Activated CD4-positive, alpha-beta T cell treated with anti-CD3 and anti-CD28 coated beads for 36 hours (primary cell): ENCODE measurements at regions of chr16 and their contacts with region 1.

Region 1: DNA sequence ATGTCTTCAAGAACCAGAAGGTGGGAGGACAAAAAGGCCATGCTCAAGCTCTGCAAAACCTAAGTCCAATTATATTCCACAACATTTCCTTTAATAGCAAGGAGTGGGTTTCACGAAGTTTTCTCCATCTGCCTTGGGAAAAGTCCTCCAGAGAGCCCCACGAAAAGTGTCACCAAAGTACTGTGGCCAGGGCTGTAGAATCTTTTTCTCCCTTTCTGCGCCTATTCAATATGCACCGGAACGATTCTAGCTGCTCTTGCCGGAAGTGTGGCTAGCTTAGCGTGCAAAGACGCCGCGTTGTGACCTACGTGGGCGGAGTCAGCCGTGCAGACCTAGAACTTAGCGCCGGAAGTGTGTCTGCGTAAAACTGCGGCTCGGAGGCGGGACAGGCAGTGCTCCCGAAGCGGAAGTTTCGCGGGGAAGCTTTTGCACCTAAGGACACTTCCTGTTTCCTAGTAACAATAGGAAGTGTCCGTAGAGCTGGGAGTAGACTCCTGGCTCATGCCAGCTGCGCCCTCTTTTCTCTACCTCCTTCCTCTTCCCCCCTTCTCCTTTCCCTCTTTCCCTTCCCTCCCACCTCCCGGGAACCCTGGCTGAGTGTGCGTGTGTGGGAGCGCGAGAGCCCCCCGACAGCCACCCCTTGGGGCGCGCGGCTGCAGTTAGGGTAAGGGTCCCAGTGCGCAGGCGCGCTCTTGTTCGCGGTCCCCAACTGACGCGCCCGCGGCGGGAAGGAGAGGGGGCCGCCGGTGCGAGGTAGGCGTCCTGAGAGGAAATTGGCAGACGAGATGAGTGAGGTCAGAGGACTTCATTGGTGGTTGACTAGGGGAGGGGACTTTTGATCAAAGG is at the starts of genes ZNF646 and ZNF668:
- DNase-seq: peak; percentile 99
- ATAC-seq: peak; percentile 83
- H3K4me3 Mint-ChIP-seq: peak within 1 kb of the TSS; percentile 97
- H3K27ac Mint-ChIP-seq: peak within 1 kb of the TSS; percentile 98
- H3K4me1 Mint-ChIP-seq: peaks cover 30% of the 10 kb centered on the region
- H3K27me3 Mint-ChIP-seq: no peaks in the 10 kb centered on the region
- total RNA-seq, gene ZNF646: 21.3 to 25.8 TPM
- total RNA-seq, gene ZNF668: 9.2 to 9.9 TPM

Region 2: GRCh38 chr16:30761928-30762810 is 312.0 kb before region 1 on chr16 and contains the starts of genes CFAP119 and RNF40:
- CTCF ChIA-PET with region 1: no interaction called
- POLR2A ChIA-PET with region 1: no interaction called
- intact Hi-C with region 1: loop called in 1 of 2 experiments (anchors 1 kb)
- DNase-seq: peak; percentile 94
- ATAC-seq: peak; percentile 98
- H3K4me3 Mint-ChIP-seq: peak within 1 kb of the TSS; percentile 90
- H3K27ac Mint-ChIP-seq: peak within 1 kb of the TSS; percentile 83
- H3K4me1 Mint-ChIP-seq: peaks cover 25% of the 10 kb centered on the region
- H3K27me3 Mint-ChIP-seq: no peaks in the 10 kb centered on the region
- total RNA-seq, gene CFAP119: 1.7 to 3.1 TPM
- total RNA-seq, gene RNF40: 72.3 to 85.5 TPM

Region 3: GRCh38 chr16:30820952-30821760 is 253.0 kb before region 1 on chr16:
- CTCF ChIA-PET with region 1: no interaction called
- POLR2A ChIA-PET with region 1: no interaction called
- intact Hi-C with region 1: no loop called
- DNase-seq: no peak
- ATAC-seq: no peak
- H3K4me3 Mint-ChIP-seq: no peak overlapping the region
- H3K27ac Mint-ChIP-seq: no peak overlapping the region
- H3K4me1 Mint-ChIP-seq: no peaks in the 10 kb centered on the region
- H3K27me3 Mint-ChIP-seq: no peaks in the 10 kb centered on the region

Region 4: GRCh38 chr16:30984669-30985400 is 89.4 kb before region 1 on chr16 and contains the start of gene HSD3B7:
- CTCF ChIA-PET with region 1: interaction called, 5 read pairs
- POLR2A ChIA-PET with region 1: interaction called, 4 read pairs
- intact Hi-C with region 1: loop called in 1 of 2 experiments (anchors 1 kb)
- DNase-seq: peak; percentile 91
- ATAC-seq: peak; percentile 92
- H3K4me3 Mint-ChIP-seq: no peak within 1 kb of the TSS
- H3K27ac Mint-ChIP-seq: peak within 1 kb of the TSS; percentile 31
- H3K4me1 Mint-ChIP-seq: peaks cover 3% of the 10 kb centered on the region
- H3K27me3 Mint-ChIP-seq: no peaks in the 10 kb centered on the region
- total RNA-seq, gene HSD3B7: 1.6 to 2.2 TPM

Region 5: DNA sequence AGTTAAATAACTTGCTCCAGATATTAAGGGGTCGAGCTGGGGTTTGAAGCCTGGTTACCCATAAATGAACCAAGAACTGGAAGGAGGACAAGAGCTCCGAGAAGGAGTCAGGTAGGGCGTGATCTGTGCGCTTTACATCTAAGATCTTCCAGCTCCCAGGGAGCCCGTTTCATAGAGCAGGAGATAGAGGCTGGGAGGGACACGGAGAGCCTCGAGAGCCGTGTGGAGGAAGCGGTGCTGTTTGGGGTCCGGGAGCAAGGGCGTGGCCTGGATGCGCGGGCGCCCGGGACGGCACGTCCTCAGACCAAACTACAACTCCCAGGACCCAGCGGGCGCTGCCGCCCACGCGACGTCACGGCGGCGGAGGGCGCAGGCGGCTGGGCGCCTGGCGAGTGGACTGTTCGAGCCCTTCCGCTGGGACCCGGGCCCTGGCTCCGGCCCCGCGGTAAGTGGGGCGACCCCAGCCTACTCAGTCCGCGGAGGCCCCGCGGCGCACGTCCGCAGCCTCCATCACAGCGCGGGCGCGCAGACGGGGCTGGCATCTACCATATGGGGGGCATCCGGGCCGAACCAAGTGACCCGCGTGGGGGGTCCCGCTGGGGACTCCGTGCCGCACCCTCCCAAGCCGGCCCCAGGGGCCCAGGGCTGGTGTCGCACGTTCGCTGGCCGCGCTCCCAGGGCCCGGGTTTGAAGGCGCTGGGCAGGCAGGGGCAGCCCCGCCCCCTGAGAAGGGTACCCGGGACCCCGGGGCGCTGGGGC is 34.0 kb after region 1 on chr16 and contains the start of gene BCKDK:
- CTCF ChIA-PET with region 1: no interaction called
- POLR2A ChIA-PET with region 1: interaction called, 3 read pairs
- intact Hi-C with region 1: loop called in 1 of 2 experiments (anchors 2 kb)
- DNase-seq: peak; percentile 90
- ATAC-seq: peak; percentile 79
- H3K4me3 Mint-ChIP-seq: peak within 1 kb of the TSS; percentile 86
- H3K27ac Mint-ChIP-seq: peak within 1 kb of the TSS; percentile 96
- H3K4me1 Mint-ChIP-seq: peaks cover 22% of the 10 kb centered on the region
- H3K27me3 Mint-ChIP-seq: no peaks in the 10 kb centered on the region
- total RNA-seq, gene BCKDK: 50.0 to 53.3 TPM

Region 6: GRCh38 chr16:31440516-31441184 is 366.5 kb after region 1 on chr16:
- CTCF ChIA-PET with region 1: no interaction called
- POLR2A ChIA-PET with region 1: no interaction called
- intact Hi-C with region 1: loop called in 1 of 2 experiments (anchors 1 kb)
- DNase-seq: no peak
- ATAC-seq: no peak
- H3K4me3 Mint-ChIP-seq: no peak overlapping the region
- H3K27ac Mint-ChIP-seq: no peak overlapping the region
- H3K4me1 Mint-ChIP-seq: peaks cover 18% of the 10 kb centered on the region
- H3K27me3 Mint-ChIP-seq: peaks cover 2% of the 10 kb centered on the region

Region 7: GRCh38 chr16:31873556-31874365 is 799.6 kb after region 1 on chr16 and contains the start of gene ZNF267:
- CTCF ChIA-PET with region 1: interaction called, 3 read pairs
- POLR2A ChIA-PET with region 1: no interaction called
- intact Hi-C with region 1: loop called in 1 of 2 experiments (anchors 2 kb)
- DNase-seq: peak; percentile 96
- ATAC-seq: peak; percentile 60
- H3K4me3 Mint-ChIP-seq: peak within 1 kb of the TSS; percentile 94
- H3K27ac Mint-ChIP-seq: peak within 1 kb of the TSS; percentile 97
- H3K4me1 Mint-ChIP-seq: peaks cover 73% of the 10 kb centered on the region
- H3K27me3 Mint-ChIP-seq: no peaks in the 10 kb centered on the region
- total RNA-seq, gene ZNF267: 61.9 to 64.9 TPM